MCF 10A (cell line): ENCODE measurements at regions of chr6 and their contacts with region 1.

Region 1: DNA sequence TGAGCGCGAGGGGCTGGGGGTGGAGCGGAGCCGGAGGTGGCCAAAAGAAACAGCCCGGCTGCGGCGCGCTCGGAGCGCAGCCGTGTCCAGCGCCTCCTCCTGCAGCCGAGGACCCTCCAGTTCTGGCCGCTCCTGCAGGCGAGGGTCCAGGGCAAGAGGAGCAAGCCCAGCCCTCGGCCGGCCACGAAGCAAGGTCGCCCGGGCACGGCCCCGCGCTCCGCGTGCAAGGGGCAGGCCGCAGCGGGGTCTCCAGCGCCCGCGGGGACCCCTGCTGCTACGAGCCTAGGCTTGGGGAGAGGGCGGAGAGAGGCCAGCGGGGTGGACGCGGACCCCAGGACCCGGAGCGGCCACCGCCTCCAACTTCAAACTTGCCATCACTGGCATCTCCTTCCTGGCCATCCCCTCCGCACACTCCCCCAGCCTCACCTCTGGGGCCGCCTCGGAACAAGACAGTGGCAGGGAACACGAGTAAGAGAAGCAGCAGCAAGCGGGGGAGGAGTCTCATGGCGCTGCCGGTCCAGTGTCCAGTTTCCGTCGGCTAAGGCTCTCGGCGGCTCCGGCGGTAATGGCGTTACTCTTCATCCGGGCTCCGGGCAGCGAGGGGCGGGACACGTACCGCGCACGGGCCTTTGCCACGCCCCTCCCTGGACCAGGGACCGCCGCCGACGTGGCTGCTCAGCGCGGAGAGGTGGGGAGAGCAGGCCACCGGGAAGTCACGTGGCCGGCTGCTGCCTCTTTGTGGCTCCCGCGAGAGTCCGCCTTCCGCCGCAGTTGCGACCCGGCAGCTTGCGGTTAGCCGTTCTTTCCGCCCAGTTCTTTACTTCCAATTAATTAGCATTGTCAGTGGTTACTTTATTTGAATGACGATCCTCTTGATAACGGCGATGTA is at the start of gene SSR1:
- DNase-seq: peak; percentile 96
- H3K4me3 Mint-ChIP-seq: peak within 1 kb of the TSS; percentile 91
- H3K27ac Mint-ChIP-seq: peak within 1 kb of the TSS; percentile 83
- H3K4me1 Mint-ChIP-seq: peaks cover 16% of the 10 kb centered on the region
- H3K27me3 Mint-ChIP-seq: no peaks in the 10 kb centered on the region
- CTCF ChIP-seq: no peak
- total RNA-seq, gene SSR1: 318 and 396 TPM in 2 replicates

Region 2: DNA sequence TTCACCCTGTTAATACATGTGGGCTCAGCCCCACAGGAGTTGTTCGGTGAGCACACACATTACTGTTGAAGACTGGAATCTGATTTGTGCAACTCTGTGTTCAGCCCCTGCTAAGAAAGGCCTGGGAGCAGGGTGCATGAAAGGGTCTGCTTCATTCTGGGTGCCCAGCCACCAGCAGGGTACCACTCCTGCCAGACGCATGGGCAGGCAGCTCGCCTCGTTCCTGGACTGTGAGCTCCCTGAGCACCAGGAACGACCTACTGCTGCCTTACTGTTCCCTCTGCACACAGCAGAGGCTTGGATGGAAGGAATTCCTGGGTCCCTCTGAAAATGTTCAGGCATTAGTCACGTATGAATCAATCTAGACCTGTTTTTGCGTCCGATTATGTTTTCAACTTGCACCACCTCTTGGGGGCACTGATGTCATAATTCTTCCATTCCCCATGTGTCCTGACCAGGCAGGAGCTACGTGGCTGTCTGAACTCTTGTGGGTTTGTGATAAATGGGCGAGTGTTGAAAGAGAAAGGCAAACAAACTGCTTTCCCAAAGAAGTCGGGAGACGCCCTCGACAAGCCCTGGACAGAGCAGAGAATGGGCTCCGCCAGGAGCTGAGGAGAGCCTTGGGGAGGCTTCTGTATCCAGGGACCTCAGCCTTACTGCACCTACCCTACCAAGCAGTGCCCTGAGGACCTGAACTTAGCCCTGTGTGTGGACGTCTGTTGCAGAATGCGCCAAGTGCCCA is 600.4 kb before region 1 on chr6:
- CTCF ChIA-PET with region 1: no interaction called
- POLR2A ChIA-PET with region 1: no interaction called
- intact Hi-C with region 1: no loop called
- DNase-seq: peak; percentile 96
- H3K4me3 Mint-ChIP-seq: peak overlapping the region; percentile 36
- H3K27ac Mint-ChIP-seq: peak overlapping the region; percentile 73
- H3K4me1 Mint-ChIP-seq: peaks cover 16% of the 10 kb centered on the region
- H3K27me3 Mint-ChIP-seq: no peaks in the 10 kb centered on the region
- CTCF ChIP-seq: no peak

Region 3: GRCh38 chr6:7219310-7219709 is 93.5 kb before region 1 on chr6:
- CTCF ChIA-PET with region 1: no interaction called
- POLR2A ChIA-PET with region 1: no interaction called
- intact Hi-C with region 1: no loop called
- DNase-seq: no peak
- H3K4me3 Mint-ChIP-seq: no peak overlapping the region
- H3K27ac Mint-ChIP-seq: no peak overlapping the region
- H3K4me1 Mint-ChIP-seq: no peaks in the 10 kb centered on the region
- H3K27me3 Mint-ChIP-seq: no peaks in the 10 kb centered on the region
- CTCF ChIP-seq: no peak

Region 4: DNA sequence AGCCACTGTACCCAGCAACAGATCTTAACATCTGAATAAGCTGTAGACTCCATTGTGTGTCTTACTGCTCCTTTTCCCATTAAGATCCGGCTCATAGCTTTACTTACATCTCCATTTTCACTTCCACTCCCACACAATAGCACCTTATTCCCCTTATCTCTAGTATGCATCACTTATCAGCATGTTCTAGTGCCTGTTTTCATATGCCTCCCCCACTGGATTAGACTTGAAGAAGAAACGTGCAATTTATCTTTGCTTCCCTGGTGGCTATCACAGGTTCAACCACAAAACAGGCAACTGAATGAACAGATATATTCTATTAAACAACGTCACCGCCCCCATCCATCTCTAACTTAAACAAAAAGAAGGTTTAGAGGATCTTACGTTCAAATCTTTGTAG is 11.9 kb before region 1 on chr6:
- CTCF ChIA-PET with region 1: no interaction called
- POLR2A ChIA-PET with region 1: interaction called, 15 read pairs
- intact Hi-C with region 1: no loop called
- DNase-seq: no peak
- H3K4me3 Mint-ChIP-seq: no peak overlapping the region
- H3K27ac Mint-ChIP-seq: peak overlapping the region; percentile 29
- H3K4me1 Mint-ChIP-seq: peaks cover 11% of the 10 kb centered on the region
- H3K27me3 Mint-ChIP-seq: no peaks in the 10 kb centered on the region
- CTCF ChIP-seq: no peak

Region 5: DNA sequence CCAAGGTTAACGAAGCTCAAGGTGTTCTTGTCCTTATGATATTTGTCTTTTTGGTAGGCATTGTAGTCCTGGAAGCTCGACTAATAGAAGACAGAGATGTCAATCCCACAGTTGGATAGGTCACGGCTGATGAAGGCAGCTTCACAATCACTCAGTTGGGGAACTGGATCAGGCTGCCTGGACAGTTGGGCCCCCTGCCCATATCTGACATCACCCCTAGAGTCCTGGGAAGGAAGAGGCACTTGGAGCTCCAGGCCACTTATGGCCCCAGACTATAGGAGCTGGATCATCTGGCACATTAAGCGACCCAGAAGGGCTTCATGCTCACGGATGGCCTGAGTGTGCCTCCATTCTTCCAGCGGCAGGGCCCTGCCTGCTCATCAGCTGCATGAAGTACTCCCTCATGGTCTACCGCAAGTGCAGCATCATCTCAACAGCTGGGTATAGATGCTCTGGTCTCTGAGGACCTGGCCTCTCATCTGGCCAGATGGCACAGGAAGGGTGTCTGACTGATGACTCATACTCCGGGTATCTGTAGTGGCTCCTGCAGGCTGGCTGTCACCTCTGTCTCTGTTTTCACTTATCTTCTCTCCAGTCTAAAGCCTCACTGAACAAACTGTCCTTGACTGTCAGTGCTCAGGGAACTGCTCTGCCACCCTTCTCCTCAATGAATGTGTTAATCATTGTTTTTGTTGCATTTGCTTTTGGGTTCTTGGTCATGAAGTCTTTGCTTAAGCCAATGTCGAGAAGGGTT is 29.3 kb after region 1 on chr6:
- CTCF ChIA-PET with region 1: interaction called, 3 read pairs
- POLR2A ChIA-PET with region 1: interaction called, 3 read pairs
- intact Hi-C with region 1: loop called (anchors 1 kb)
- DNase-seq: peak; percentile 23
- H3K4me3 Mint-ChIP-seq: no peak overlapping the region
- H3K27ac Mint-ChIP-seq: peak overlapping the region; percentile 82
- H3K4me1 Mint-ChIP-seq: peaks cover 7% of the 10 kb centered on the region
- H3K27me3 Mint-ChIP-seq: no peaks in the 10 kb centered on the region
- CTCF ChIP-seq: no peak

Region 6: GRCh38 chr6:7691675-7692452 is 379.0 kb after region 1 on chr6:
- CTCF ChIA-PET with region 1: no interaction called
- POLR2A ChIA-PET with region 1: no interaction called
- intact Hi-C with region 1: no loop called
- DNase-seq: peak; percentile 77
- H3K4me3 Mint-ChIP-seq: peak overlapping the region; percentile 36
- H3K27ac Mint-ChIP-seq: peak overlapping the region; percentile 73
- H3K4me1 Mint-ChIP-seq: peaks cover 17% of the 10 kb centered on the region
- H3K27me3 Mint-ChIP-seq: no peaks in the 10 kb centered on the region
- CTCF ChIP-seq: no peak